ENCODE measurements at regions of chr9 and their contacts with region 1.

Region 1: GRCh38 chr9:133992780-133993634 is 883 bp upstream of the VAV2 start:
- DNase-seq: peak; percentile 43
- ATAC-seq: peak; percentile 70
- H3K4me3 ChIP-seq: peak overlapping the region; percentile 79 to 80
- H3K27ac ChIP-seq: peak overlapping the region; percentile 89
- H3K4me1 ChIP-seq: peaks cover 19 to 40% of the 10 kb centered on the region in 2 experiments
- H3K27me3 ChIP-seq: no peaks in the 10 kb centered on the region
- CTCF ChIP-seq: peak in 2 of 3 experiments; percentile 48 to 50; a peak in 4 of 6 replicates
- POLR2A ChIP-seq: peak; percentile 41
- RAD21 ChIP-seq: no peak

Region 2: GRCh38 chr9:133532937-133533668 is 459.9 kb before region 1 on chr9:
- CTCF ChIA-PET with region 1: no interaction called
- POLR2A ChIA-PET with region 1: no interaction called
- RAD21 ChIA-PET with region 1: no interaction called
- intact Hi-C with region 1: loop called (anchors 2 kb)
- DNase-seq: peak; percentile 73
- ATAC-seq: peak; percentile 92
- H3K4me3 ChIP-seq: no peak overlapping the region
- H3K27ac ChIP-seq: no peak overlapping the region
- H3K4me1 ChIP-seq: no peaks in the 10 kb centered on the region; a peak in 1 of 4 replicates
- H3K27me3 ChIP-seq: no peaks in the 10 kb centered on the region
- CTCF ChIP-seq: peak; percentile 77 to 91 (median 79)
- POLR2A ChIP-seq: no peak
- RAD21 ChIP-seq: peak; percentile 91

Region 3: GRCh38 chr9:133742849-133743444 is 250.1 kb before region 1 on chr9:
- CTCF ChIA-PET with region 1: interaction called, 11 read pairs
- POLR2A ChIA-PET with region 1: no interaction called
- RAD21 ChIA-PET with region 1: no interaction called
- intact Hi-C with region 1: loop called (anchors 5 kb)
- DNase-seq: peak; percentile 77
- ATAC-seq: peak; percentile 92
- H3K4me3 ChIP-seq: no peak overlapping the region
- H3K27ac ChIP-seq: no peak overlapping the region
- H3K4me1 ChIP-seq: peaks cover 5 to 8% of the 10 kb centered on the region in 2 experiments; a peak in 3 of 4 replicates
- H3K27me3 ChIP-seq: 0 out of 2 replicates have a peak, but pooled peaks cover 10% of the 10 kb centered on the region
- CTCF ChIP-seq: peak; percentile 99
- POLR2A ChIP-seq: no peak
- RAD21 ChIP-seq: peak; percentile 83

Region 4: GRCh38 chr9:133792721-133793470 is 200.1 kb before region 1 on chr9:
- CTCF ChIA-PET with region 1: interaction called, 10 read pairs
- POLR2A ChIA-PET with region 1: no interaction called
- RAD21 ChIA-PET with region 1: interaction called, 4 to 5 read pairs
- intact Hi-C with region 1: loop called (anchors 1 kb)
- DNase-seq: peak; percentile 16
- ATAC-seq: peak; percentile 89
- H3K4me3 ChIP-seq: no peak overlapping the region
- H3K27ac ChIP-seq: no peak overlapping the region
- H3K4me1 ChIP-seq: peaks cover 2 to 7% of the 10 kb centered on the region in 2 experiments; a peak in 2 of 4 replicates
- H3K27me3 ChIP-seq: no peaks in the 10 kb centered on the region
- CTCF ChIP-seq: peak; percentile 85 to 89 (median 85)
- POLR2A ChIP-seq: no peak
- RAD21 ChIP-seq: peak; percentile 93

Region 5: GRCh38 chr9:134024828-134025605 is 32.0 kb after region 1 on chr9 and contains the start of gene BRD3OS:
- CTCF ChIA-PET with region 1: interaction called, 27 read pairs
- POLR2A ChIA-PET with region 1: interaction called, 9 read pairs
- RAD21 ChIA-PET with region 1: interaction called in 1 of 2 experiments, 7 read pairs
- intact Hi-C with region 1: loop called (anchors 1 kb)
- DNase-seq: peak; percentile 98
- ATAC-seq: peak; percentile 91
- H3K4me3 ChIP-seq: peak within 1 kb of the TSS; percentile 70 to 73
- H3K27ac ChIP-seq: peak within 1 kb of the TSS; percentile 50
- H3K4me1 ChIP-seq: peaks cover 3 to 23% of the 10 kb centered on the region in 2 experiments; a peak in 3 of 4 replicates
- H3K27me3 ChIP-seq: no peaks in the 10 kb centered on the region
- CTCF ChIP-seq: no peak
- POLR2A ChIP-seq: no peak
- RAD21 ChIP-seq: no peak
- total RNA-seq, gene BRD3OS: 17.0 TPM

Region 6: GRCh38 chr9:134407123-134407808 is 414.3 kb after region 1 on chr9:
- CTCF ChIA-PET with region 1: no interaction called
- POLR2A ChIA-PET with region 1: no interaction called
- RAD21 ChIA-PET with region 1: no interaction called
- intact Hi-C with region 1: no loop called
- DNase-seq: peak; percentile 45
- ATAC-seq: peak; percentile 82
- H3K4me3 ChIP-seq: peak overlapping the region; percentile 6 to 46; a peak in 3 of 4 replicates
- H3K27ac ChIP-seq: peak overlapping the region; percentile 57
- H3K4me1 ChIP-seq: peaks cover 20 to 55% of the 10 kb centered on the region in 2 experiments
- H3K27me3 ChIP-seq: no peaks in the 10 kb centered on the region
- CTCF ChIP-seq: no peak
- POLR2A ChIP-seq: no peak
- RAD21 ChIP-seq: no peak